ENCODE measurements at regions of chr6 and their contacts with region 1.

Region 1: DNA sequence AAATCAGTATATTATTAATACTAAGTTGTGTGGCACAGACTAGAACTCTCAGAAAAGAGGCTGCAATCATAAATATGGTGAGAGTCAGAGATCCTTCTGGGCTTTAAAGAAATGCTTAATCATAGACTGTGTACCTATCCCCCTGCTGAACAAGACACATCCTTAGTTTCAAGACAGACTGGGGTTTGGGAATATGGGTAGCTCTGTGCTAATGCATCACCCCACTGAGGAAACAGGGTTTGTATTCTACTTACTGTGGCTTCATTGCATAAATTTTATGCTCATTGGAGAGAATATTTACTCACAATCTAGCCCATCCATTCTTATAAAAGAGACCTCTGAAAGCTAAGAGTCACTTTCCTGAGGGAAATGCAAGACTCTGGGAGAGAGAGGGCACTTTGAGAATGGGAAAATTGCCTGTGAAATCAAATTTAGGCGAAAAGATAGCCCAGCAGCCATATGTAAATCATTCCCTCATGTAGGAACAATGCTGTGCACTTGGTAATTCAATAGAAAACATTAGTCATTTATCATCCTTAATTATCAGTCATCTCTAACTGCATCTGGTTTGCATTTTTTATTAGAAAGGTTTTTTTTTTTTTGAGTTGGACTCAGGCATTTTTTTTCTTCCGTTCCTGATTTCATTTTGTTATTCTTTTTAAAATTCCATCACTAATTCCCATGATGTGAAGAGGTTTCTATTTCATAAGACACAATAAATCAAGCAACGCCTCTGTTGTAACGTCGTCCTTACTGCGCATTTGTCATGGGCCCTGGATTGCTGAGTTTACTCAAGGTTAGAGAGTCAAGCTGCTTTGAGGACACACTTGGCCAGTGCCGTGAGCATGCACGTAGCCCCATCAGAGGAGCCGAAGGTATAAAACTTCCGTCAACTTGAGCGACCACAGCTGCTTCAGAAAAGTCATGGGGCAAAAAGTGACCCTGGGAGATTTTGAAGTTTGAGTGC is 91.8 kb downstream of the TRMT11 start:
- DNase-seq: no peak
- CTCF ChIP-seq: no peak

Region 2: DNA sequence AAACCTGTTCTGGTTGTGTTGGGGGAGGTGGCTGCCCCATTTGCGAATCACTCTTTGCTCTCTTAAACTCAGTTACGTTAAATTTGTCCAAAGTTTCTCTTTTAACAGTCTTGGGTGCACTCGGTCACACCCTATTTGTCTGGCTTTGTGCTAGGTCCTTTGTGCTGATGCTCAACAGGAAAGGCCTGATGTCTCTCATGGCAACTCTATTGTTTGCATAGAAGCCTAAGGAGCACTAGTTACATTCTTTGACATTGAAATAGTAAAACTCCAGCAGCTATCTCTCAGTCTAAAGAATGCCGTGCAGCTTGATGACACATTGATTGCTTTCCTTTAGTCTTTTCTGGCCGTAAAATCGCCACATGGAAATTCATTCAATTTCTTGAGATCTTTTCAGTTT is 13.4 kb after region 1 on chr6:
- CTCF ChIA-PET with region 1: interaction called, 10 read pairs
- POLR2A ChIA-PET with region 1: no interaction called
- DNase-seq: no peak
- CTCF ChIP-seq: no peak